Aorta (tissue), 5 donors: ENCODE measurements at regions of chr19 and their contacts with region 1.

Region 1: DNA sequence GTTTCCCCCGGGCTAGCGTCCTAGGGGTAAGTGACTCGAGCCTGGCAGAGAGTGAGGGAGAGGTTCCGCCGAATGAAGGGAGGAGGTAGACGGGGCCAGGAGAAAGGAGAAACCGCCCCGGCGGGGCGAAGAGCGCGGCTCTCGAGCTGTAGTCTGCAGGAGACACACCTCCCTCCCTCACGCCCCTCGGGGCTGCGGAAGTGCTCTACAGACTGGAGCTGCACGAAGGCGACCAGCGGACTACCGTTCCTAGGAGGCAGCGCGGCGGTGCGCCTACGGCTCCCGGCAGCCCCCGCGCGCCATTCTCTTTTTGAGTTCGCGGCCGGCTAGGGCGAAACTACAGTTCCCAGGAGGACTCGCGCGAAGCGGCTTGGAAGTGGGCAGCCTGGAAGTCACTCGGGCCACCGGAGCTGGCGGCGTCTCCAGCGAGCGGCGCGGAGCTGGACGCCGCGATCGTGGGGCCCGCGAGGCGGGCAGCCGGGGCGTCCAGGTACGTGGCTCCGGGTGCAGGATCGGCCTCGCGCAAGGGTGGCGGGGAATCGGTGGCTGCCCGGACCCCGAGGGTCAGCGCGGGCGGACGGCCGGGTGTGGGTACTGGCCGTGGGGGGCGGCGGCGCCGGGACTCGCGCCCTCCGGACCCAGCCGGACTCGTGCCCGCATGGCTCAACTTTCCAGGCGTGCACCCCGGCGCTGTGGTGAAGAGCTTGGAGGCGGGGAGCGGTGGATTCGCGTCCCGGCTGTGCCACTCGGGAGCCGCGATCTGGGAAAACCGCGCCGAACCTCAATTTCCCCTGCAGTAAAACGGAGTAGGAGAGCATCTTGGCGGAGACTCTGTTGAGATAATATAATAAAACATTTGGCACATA is at the start of gene SIPA1L3:
- DNase-seq: peak; percentile 97 to 98
- ATAC-seq: peak; percentile 98
- H3K4me3 ChIP-seq: peak within 1 kb of the TSS; percentile 61 to 93
- H3K27ac ChIP-seq: no peak within 1 kb of the TSS
- H3K4me1 ChIP-seq: peaks cover 0 to 3% of the 10 kb centered on the region in 2 donors
- H3K27me3 ChIP-seq: no peaks in the 10 kb centered on the region
- total RNA-seq, gene SIPA1L3: 17.2 to 20.9 TPM

Region 2: GRCh38 chr19:38004521-38005223 is 97.6 kb after region 1 on chr19:
- intact Hi-C with region 1: loop called in 1 of 2 experiments (anchors 1 kb)
- DNase-seq: peak; percentile 87 to 89
- ATAC-seq: peak; percentile 96
- H3K4me3 ChIP-seq: peak overlapping the region; percentile 44 to 56
- H3K27ac ChIP-seq: peak overlapping the region; percentile 0 to 64
- H3K4me1 ChIP-seq: peaks cover 0 to 2% of the 10 kb centered on the region in 2 donors
- H3K27me3 ChIP-seq: no peaks in the 10 kb centered on the region

Region 3: DNA sequence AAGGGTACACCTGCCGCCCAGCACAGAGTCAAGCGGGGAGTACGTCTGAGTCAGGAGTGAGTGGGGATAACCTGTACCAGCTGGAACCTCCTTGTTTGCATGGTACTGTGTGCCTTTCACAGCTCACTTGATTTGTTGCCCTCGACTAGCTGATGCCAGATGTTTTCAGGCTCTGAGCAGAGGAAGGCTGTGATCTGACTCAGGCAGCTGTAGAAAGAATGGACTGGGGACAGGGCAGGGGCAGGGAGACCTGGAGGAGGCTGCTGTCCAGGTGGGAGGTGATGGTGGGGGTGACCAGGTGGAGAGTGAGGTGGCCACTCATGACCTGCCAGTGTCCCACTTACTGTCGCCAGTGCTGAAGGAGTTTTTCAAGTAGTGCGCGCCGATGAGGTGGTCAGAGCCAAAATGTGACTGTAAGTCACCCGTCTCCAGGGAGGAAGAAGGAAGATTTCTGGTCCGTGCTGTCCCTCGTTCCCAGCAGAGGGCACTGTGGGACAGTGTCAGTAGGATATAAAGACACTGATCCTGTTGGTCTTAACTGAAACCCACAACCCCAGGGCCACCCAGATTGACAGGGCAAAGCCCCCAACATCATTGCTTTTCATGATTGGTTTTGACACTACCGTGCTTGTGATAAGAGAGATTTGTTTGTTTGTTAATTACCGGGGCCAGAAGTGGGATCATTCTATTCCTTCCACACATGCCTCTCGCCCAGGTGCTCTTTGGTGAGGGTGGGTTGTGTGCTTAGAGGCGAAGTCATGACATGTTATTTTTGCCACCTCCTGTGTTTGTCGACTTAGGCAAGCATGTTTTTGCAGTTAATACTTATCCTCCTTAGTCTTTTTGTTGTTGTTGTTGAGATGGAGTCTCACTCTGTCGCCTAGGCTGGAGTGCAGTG is 188.6 kb after region 1 on chr19:
- intact Hi-C with region 1: loop called (anchors 5 to 10 kb)
- DNase-seq: peak; percentile 81 to 86
- ATAC-seq: peak; percentile 64
- H3K4me3 ChIP-seq: no peak overlapping the region
- H3K27ac ChIP-seq: no peak overlapping the region
- H3K4me1 ChIP-seq: no peaks in the 10 kb centered on the region
- H3K27me3 ChIP-seq: no peaks in the 10 kb centered on the region

Region 4: GRCh38 chr19:38224014-38224862 is 317.1 kb after region 1 on chr19 and contains the start of gene DPF1:
- intact Hi-C with region 1: loop called in 1 of 2 experiments (anchors 10 kb)
- DNase-seq: no peak
- ATAC-seq: no peak
- H3K4me3 ChIP-seq: no peak within 1 kb of the TSS
- H3K27ac ChIP-seq: no peak within 1 kb of the TSS
- H3K4me1 ChIP-seq: no peaks in the 10 kb centered on the region
- H3K27me3 ChIP-seq: no peaks in the 10 kb centered on the region
- total RNA-seq, gene DPF1: 1.3 to 2.1 TPM